ENCODE measurements at regions of chr1 and their contacts with region 1.

Region 1: DNA sequence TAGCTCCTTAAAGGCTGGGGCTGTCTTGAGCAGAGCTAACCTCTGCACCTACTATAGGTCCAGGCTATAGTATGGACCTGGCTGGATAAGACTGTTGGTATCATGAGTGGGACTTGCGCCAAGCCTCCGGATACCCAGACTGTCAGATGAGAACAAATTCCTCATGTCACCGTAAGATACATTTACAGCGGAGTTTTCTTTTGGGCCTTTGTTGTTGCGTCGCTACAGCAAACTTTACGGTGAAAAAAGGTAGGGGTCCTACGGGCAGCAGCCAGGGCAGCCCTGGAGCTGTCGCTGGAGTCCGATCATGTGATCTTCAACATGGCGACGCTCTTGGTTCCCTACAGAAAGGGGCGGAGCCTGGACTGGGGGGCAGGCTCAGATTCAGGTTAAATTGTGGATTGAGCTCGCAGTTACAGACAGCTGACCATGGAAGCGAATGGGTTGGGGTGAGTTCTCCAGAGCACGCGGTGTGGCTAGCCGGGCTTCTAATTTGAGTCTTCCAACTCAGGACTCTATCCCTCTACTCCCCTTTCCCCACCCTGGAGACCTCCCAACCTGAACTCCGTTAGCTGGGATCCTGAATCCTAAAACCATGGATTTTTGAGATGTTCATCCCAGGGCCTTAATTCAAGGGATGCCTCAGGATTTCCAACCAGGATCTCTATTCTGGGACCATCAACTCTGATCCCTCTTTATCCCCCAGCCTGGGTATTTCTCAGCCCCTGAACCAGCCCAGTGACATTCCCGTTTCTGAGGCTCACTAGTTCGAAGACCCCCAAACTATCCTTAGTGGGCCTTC is at the start of gene UROD:
- DNase-seq: peak; percentile 87 to 95 (median 91)
- H3K4me3 ChIP-seq: peak within 1 kb of the TSS; percentile 86 to 98
- H3K4me3 Mint-ChIP-seq: peak within 1 kb of the TSS; percentile 88 to 98 (median 96)
- H3K27ac ChIP-seq: peak within 1 kb of the TSS; percentile 71
- H3K27ac Mint-ChIP-seq: peak within 1 kb of the TSS; percentile 91 to 99 (median 96)
- H3K4me1 ChIP-seq: peaks cover 40% of the 10 kb centered on the region
- H3K4me1 Mint-ChIP-seq: peaks cover 29 to 60% (median 48%) of the 10 kb centered on the region in 4 donors
- H3K27me3 ChIP-seq: no peaks in the 10 kb centered on the region
- H3K27me3 Mint-ChIP-seq: no peaks in the 10 kb centered on the region
- total RNA-seq, gene UROD: 46.0 to 52.0 TPM

Region 2: DNA sequence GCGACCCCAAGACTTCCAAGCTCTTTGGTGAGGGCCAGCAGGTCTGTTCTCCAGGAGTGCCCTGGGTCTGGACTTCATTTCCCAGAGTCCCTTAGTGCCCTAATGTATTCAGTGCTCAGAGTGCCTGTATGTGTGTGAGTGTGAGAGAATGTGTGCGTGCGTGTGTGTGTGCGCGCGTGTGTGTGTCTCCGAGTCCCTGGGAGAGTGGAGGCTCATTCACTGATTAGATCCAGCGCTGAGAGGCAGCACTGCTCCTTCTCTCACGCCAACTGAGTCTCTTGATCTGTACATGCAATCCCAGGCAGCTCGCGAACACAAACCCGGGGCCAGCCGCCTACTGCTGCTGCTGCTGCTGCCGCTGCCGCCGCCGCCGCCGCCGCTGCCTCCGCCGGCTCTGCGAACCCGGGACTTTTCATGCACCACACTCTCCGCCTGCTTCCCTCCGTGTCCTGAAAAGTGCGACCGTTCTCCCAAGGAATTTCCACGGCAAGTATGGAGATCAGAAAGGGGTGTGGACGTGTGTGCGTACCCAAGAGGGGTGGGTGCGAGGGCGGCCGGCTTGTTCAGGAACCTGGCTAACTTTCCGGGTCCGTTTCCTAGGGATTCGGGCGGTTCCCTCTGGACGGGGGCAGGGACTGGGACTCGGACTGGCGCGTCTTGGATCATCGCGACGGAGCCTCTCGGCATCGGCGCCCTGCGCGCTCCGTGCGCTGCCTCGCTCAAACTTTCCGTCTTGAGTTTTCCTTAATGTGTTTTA is 606.8 kb before region 1 on chr1 and contains the start of gene RNF220:
- CTCF ChIA-PET with region 1: no interaction called
- POLR2A ChIA-PET with region 1: no interaction called
- intact Hi-C with region 1: no loop called
- DNase-seq: peak; percentile 29 to 46 (median 39)
- H3K4me3 ChIP-seq: peak within 1 kb of the TSS; percentile 42 to 54
- H3K4me3 Mint-ChIP-seq: peak within 1 kb of the TSS; percentile 84 to 95 (median 88)
- H3K27ac ChIP-seq: no peak within 1 kb of the TSS
- H3K27ac Mint-ChIP-seq: peak within 1 kb of the TSS in 2 of 7 donors; percentile 72 to 76
- H3K4me1 ChIP-seq: peaks cover 46% of the 10 kb centered on the region
- H3K4me1 Mint-ChIP-seq: peaks cover 14 to 45% (median 27%) of the 10 kb centered on the region in 4 donors
- H3K27me3 ChIP-seq: peaks cover 71% of the 10 kb centered on the region
- H3K27me3 Mint-ChIP-seq: peaks cover 44 to 55% of the 10 kb centered on the region in 2 donors
- total RNA-seq, gene RNF220: 115 to 125 TPM

Region 3: GRCh38 chr1:44721485-44722361 is 290.3 kb before region 1 on chr1:
- CTCF ChIA-PET with region 1: interaction called, 3 read pairs
- POLR2A ChIA-PET with region 1: interaction called, 45 read pairs
- intact Hi-C with region 1: loop called (anchors 5 kb)
- DNase-seq: peak; percentile 77 to 85 (median 79)
- H3K4me3 ChIP-seq: no peak overlapping the region
- H3K4me3 Mint-ChIP-seq: peak overlapping the region; percentile 57 to 87 (median 80)
- H3K27ac ChIP-seq: peak overlapping the region; percentile 51
- H3K27ac Mint-ChIP-seq: peak overlapping the region; percentile 89 to 97 (median 94)
- H3K4me1 ChIP-seq: peaks cover 58% of the 10 kb centered on the region
- H3K4me1 Mint-ChIP-seq: peaks cover 50 to 74% (median 62%) of the 10 kb centered on the region in 4 donors
- H3K27me3 ChIP-seq: no peaks in the 10 kb centered on the region
- H3K27me3 Mint-ChIP-seq: no peaks in the 10 kb centered on the region

Region 4: DNA sequence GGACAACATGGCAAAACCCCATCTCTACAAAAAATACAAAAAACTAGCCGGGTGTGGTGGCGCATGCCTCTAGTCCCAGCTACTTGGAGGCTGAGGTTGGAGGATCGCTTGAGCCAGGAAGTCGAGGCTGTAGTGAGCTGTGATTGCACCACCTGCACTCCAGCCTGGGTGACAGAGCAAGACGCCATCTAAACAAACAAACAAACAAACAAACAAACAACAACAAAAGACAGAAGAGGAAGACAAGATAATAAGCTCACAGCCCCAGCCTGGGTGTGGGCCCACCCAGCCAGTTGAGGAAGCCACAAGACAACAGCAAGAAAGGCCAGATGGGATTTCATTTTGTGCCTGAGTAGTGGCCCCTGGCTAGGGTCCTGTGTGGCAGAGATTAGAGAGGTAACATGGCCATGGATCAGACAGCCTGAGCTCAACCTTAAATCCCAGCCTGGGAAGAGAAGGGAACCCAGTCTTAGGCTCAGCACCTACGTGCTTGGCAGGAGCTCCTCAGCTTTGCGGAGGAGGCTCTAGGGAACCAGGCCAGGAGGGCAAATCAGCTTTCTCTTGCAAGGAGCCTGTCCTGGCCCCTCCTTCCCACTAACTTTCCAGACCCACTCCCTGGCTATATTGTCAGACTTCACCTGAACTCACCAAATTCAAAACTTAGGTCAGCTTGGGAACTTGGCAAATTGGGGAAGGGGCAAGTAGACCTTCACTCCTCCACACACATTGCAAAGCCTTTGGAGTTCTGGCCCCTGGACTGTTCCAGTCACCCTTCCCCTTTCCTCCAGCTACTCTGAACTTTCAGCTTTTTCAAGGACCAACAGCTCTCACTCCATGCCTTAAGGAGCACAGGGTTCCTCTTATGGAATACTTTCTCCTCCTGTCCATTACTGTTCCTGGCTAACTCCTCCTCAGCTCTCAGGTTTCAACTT is 219.0 kb before region 1 on chr1:
- CTCF ChIA-PET with region 1: interaction called, 13 read pairs
- POLR2A ChIA-PET with region 1: interaction called, 17 read pairs
- intact Hi-C with region 1: loop called (anchors 2 kb)
- DNase-seq: no peak
- H3K4me3 ChIP-seq: no peak overlapping the region
- H3K4me3 Mint-ChIP-seq: no peak overlapping the region
- H3K27ac ChIP-seq: no peak overlapping the region
- H3K27ac Mint-ChIP-seq: peak overlapping the region in 3 of 7 donors; percentile 44 to 91 (median 79)
- H3K4me1 ChIP-seq: no peaks in the 10 kb centered on the region
- H3K4me1 Mint-ChIP-seq: peaks cover 0 to 5% (median 2%) of the 10 kb centered on the region in 4 donors
- H3K27me3 ChIP-seq: no peaks in the 10 kb centered on the region
- H3K27me3 Mint-ChIP-seq: no peaks in the 10 kb centered on the region

Region 5: GRCh38 chr1:44819608-44820327 is 192.3 kb before region 1 on chr1:
- CTCF ChIA-PET with region 1: no interaction called
- POLR2A ChIA-PET with region 1: interaction called, 49 read pairs
- intact Hi-C with region 1: no loop called
- DNase-seq: peak; percentile 83 to 90 (median 88)
- H3K4me3 ChIP-seq: peak overlapping the region; percentile 74 to 86
- H3K4me3 Mint-ChIP-seq: peak overlapping the region; percentile 91 to 96 (median 95)
- H3K27ac ChIP-seq: peak overlapping the region; percentile 88
- H3K27ac Mint-ChIP-seq: peak overlapping the region; percentile 100
- H3K4me1 ChIP-seq: peaks cover 33% of the 10 kb centered on the region
- H3K4me1 Mint-ChIP-seq: peaks cover 22 to 57% (median 35%) of the 10 kb centered on the region in 4 donors
- H3K27me3 ChIP-seq: no peaks in the 10 kb centered on the region
- H3K27me3 Mint-ChIP-seq: no peaks in the 10 kb centered on the region

Region 6: GRCh38 chr1:45205910-45206721 is 194.1 kb after region 1 on chr1 and contains the start of gene ZSWIM5:
- CTCF ChIA-PET with region 1: no interaction called
- POLR2A ChIA-PET with region 1: interaction called, 5 read pairs
- intact Hi-C with region 1: loop called (anchors 5 kb)
- DNase-seq: peak; percentile 63 to 77 (median 75)
- H3K4me3 ChIP-seq: peak within 1 kb of the TSS; percentile 1 to 58
- H3K4me3 Mint-ChIP-seq: peak within 1 kb of the TSS; percentile 93 to 97 (median 95)
- H3K27ac ChIP-seq: peak within 1 kb of the TSS; percentile 31
- H3K27ac Mint-ChIP-seq: peak within 1 kb of the TSS; percentile 85 to 93 (median 90)
- H3K4me1 ChIP-seq: peaks cover 22% of the 10 kb centered on the region
- H3K4me1 Mint-ChIP-seq: peaks cover 17 to 33% (median 26%) of the 10 kb centered on the region in 4 donors
- H3K27me3 ChIP-seq: no peaks in the 10 kb centered on the region
- H3K27me3 Mint-ChIP-seq: peaks cover 1% of the 10 kb centered on the region in 2 donors
- total RNA-seq, gene ZSWIM5: 3.4 to 3.7 TPM

Region 7: GRCh38 chr1:45490626-45491486 is 478.8 kb after region 1 on chr1 and contains the start of gene TESK2:
- CTCF ChIA-PET with region 1: interaction called, 122 read pairs
- POLR2A ChIA-PET with region 1: interaction called, 43 read pairs
- intact Hi-C with region 1: no loop called
- DNase-seq: peak; percentile 97 to 100 (median 99)
- H3K4me3 ChIP-seq: peak within 1 kb of the TSS; percentile 71 to 79
- H3K4me3 Mint-ChIP-seq: no peak within 1 kb of the TSS
- H3K27ac ChIP-seq: peak within 1 kb of the TSS; percentile 68
- H3K27ac Mint-ChIP-seq: no peak within 1 kb of the TSS
- H3K4me1 ChIP-seq: peaks cover 22% of the 10 kb centered on the region
- H3K4me1 Mint-ChIP-seq: peaks cover 5 to 13% (median 10%) of the 10 kb centered on the region in 4 donors
- H3K27me3 ChIP-seq: no peaks in the 10 kb centered on the region
- H3K27me3 Mint-ChIP-seq: no peaks in the 10 kb centered on the region
- total RNA-seq, gene TESK2: 7.5 to 7.7 TPM

Region 8: DNA sequence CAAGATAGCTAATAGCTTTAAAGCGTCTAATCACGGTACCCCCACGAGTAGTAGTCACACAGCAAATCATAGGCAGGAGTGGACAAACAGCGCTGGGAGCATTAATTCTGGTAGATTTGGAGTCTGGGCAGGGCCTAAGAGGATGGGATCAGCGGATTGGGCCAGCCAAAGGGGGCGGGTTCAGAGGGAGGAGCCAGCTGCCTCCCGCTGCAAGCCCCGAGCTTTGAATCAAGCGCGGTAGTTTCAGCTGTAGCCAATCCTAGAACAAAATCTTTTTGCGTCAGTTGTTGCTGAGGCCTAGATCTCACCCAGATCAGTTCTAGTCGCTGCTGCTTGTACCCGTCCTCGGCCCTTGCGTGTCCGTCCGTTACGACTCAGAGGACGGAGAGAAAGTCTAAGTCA is 571.2 kb after region 1 on chr1:
- CTCF ChIA-PET with region 1: interaction called, 3 read pairs
- POLR2A ChIA-PET with region 1: interaction called, 15 read pairs
- intact Hi-C with region 1: loop called (anchors 1 kb)
- DNase-seq: peak; percentile 95 to 97 (median 96)
- H3K4me3 ChIP-seq: peak overlapping the region; percentile 99
- H3K4me3 Mint-ChIP-seq: peak overlapping the region; percentile 93 to 100 (median 100)
- H3K27ac ChIP-seq: peak overlapping the region; percentile 88
- H3K27ac Mint-ChIP-seq: peak overlapping the region; percentile 94 to 100 (median 99)
- H3K4me1 ChIP-seq: peaks cover 26% of the 10 kb centered on the region
- H3K4me1 Mint-ChIP-seq: peaks cover 20 to 42% (median 28%) of the 10 kb centered on the region in 4 donors
- H3K27me3 ChIP-seq: no peaks in the 10 kb centered on the region
- H3K27me3 Mint-ChIP-seq: no peaks in the 10 kb centered on the region

Measured in CD4-positive, alpha-beta memory T cell (primary cell).